Activated CD8-positive, alpha-beta memory T cell treated with anti-CD3 and anti-CD28 coated beads, Interleukin-2, amount 10 ng/mL, durations not matched to agents 7 days and 5 days (primary cell): ENCODE measurements at regions of chr7 and their contacts with region 1.

Region 1: GRCh38 chr7:45923290-45923689 is 2.2 kb upstream of the IGFBP3 start:
- DNase-seq: peak; percentile 77
- ATAC-seq: peak; percentile 25
- H3K4me3 Mint-ChIP-seq: peak overlapping the region; percentile 57
- H3K27ac Mint-ChIP-seq: peak overlapping the region; percentile 78
- H3K4me1 Mint-ChIP-seq: peaks cover 33% of the 10 kb centered on the region
- H3K27me3 Mint-ChIP-seq: peaks cover 58% of the 10 kb centered on the region

Region 2: GRCh38 chr7:45940939-45941338 is 17.6 kb after region 1 on chr7:
- CTCF ChIA-PET with region 1: interaction called, 11 read pairs
- DNase-seq: no peak
- ATAC-seq: no peak
- H3K4me3 Mint-ChIP-seq: peak overlapping the region; percentile 61
- H3K27ac Mint-ChIP-seq: no peak overlapping the region
- H3K4me1 Mint-ChIP-seq: peaks cover 15% of the 10 kb centered on the region
- H3K27me3 Mint-ChIP-seq: peaks cover 4% of the 10 kb centered on the region